PC-9 (cell line): ENCODE measurements at regions of chr5 and their contacts with region 1.

Region 1: DNA sequence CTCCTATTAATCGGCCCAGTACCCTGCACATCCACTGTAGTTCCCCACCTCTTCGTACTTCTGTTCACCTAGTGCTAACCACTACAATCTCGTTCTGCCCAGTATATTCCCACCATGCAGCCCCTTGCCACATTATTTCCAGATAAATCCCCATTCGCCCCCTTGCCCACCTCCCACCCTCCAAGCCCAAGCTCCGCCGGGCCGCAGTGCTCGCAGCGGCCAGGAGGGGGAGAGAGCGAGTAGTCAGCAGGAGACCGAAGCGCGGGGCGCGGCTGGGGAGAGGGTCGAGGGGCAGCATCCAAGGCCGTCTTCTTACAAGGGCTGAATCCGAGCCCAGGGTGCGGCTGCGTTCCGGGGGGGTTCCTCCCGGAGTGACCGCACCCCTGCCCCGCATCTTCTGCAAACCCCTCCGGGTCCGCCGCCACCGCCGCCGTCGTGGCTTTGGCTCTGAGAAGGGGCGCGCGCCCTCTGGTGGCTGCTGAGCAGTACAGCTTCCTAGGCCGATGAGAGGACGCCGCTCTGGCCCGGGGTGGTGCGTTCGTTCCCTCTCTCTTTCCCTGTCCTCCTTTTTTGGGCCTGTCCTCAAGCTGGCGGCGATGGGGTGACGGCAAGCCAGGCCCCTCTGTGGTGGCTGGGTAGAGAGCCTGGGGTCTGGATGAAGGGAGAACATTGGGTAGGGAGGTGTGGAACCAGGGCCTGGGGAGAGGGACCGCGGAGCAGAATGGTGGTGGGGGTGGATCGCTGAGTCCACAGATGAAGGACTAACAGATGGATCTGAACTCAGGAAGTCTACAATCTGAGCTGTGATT is 30.0 kb upstream of the PSD2 start:
- DNase-seq: peak in 1 of 2 experiments; percentile 80
- H3K4me3 ChIP-seq: peak overlapping the region; percentile 73
- H3K27ac ChIP-seq: no peak overlapping the region
- H3K4me1 ChIP-seq: peaks cover 18% of the 10 kb centered on the region
- H3K27me3 ChIP-seq: no peaks in the 10 kb centered on the region
- CTCF ChIP-seq: peak; percentile 99

Region 2: GRCh38 chr5:139167952-139168730 is 597.5 kb before region 1 on chr5:
- CTCF ChIA-PET with region 1: no interaction called
- POLR2A ChIA-PET with region 1: no interaction called
- intact Hi-C with region 1: no loop called
- DNase-seq: no peak
- H3K4me3 ChIP-seq: no peak overlapping the region
- H3K27ac ChIP-seq: no peak overlapping the region
- H3K4me1 ChIP-seq: no peaks in the 10 kb centered on the region
- H3K27me3 ChIP-seq: no peaks in the 10 kb centered on the region
- CTCF ChIP-seq: no peak

Region 3: GRCh38 chr5:139611703-139612584 is 153.7 kb before region 1 on chr5:
- CTCF ChIA-PET with region 1: no interaction called
- POLR2A ChIA-PET with region 1: no interaction called
- intact Hi-C with region 1: no loop called
- DNase-seq: no peak
- H3K4me3 ChIP-seq: no peak overlapping the region
- H3K27ac ChIP-seq: no peak overlapping the region
- H3K4me1 ChIP-seq: no peaks in the 10 kb centered on the region
- H3K27me3 ChIP-seq: no peaks in the 10 kb centered on the region
- CTCF ChIP-seq: no peak

Region 4: GRCh38 chr5:139690064-139690802 is 75.4 kb before region 1 on chr5:
- CTCF ChIA-PET with region 1: interaction called, 3 read pairs
- POLR2A ChIA-PET with region 1: no interaction called
- intact Hi-C with region 1: loop called (anchors 1 kb)
- DNase-seq: peak in 1 of 2 experiments; percentile 57
- H3K4me3 ChIP-seq: no peak overlapping the region
- H3K27ac ChIP-seq: no peak overlapping the region
- H3K4me1 ChIP-seq: no peaks in the 10 kb centered on the region
- H3K27me3 ChIP-seq: no peaks in the 10 kb centered on the region
- CTCF ChIP-seq: peak; percentile 74

Region 5: GRCh38 chr5:139696894-139697658 is 68.5 kb before region 1 on chr5:
- CTCF ChIA-PET with region 1: interaction called, 3 read pairs
- POLR2A ChIA-PET with region 1: no interaction called
- intact Hi-C with region 1: loop called (anchors 2 kb)
- DNase-seq: peak in 1 of 2 experiments; percentile 75
- H3K4me3 ChIP-seq: peak overlapping the region; percentile 45; the same call in 1 of the 2 replicates
- H3K27ac ChIP-seq: no peak overlapping the region
- H3K4me1 ChIP-seq: peaks cover 4% of the 10 kb centered on the region; the same call in 1 of the 2 replicates
- H3K27me3 ChIP-seq: peaks cover 15% of the 10 kb centered on the region; the same call in 1 of the 2 replicates
- CTCF ChIP-seq: no peak

Region 6: DNA sequence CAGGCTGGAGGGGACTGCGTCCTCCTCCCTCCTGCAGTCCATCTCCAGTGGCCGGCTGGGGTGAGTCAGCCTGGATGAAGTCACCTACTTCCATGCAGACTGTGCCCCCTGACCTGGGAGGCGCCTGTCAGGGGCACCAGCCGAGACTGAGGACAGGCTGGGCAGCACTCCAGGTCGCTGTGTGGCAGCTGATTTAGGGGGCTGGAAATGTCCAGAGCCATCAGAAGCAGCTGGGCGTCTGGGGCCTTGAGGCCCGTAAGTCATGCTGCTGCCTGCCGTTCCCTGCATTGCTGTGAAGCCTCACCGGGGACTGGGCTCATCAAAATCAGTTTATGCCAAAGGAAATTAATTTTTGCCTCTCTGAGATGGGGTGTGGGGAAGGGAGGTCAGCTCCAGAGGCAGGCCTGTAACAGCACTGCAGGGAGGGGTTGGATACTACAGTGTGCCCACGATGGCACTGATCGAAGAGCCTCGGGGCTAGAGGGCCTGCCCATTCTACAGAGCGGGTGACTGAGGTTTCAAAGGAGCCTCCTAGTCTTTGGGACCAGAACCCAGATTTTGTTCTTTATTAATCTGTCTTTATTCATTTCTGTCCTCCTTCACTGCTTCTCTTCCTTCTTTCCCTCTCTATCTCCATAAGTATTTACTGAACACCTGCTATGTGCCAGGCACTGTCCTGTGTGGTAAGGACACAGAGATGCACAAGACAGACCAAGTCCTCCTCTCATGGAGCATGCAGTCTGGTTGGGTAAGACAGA is 40.4 kb before region 1 on chr5:
- CTCF ChIA-PET with region 1: no interaction called
- POLR2A ChIA-PET with region 1: no interaction called
- intact Hi-C with region 1: loop called (anchors 1 kb)
- DNase-seq: peak; percentile 57 to 67
- H3K4me3 ChIP-seq: no peak overlapping the region
- H3K27ac ChIP-seq: no peak overlapping the region
- H3K4me1 ChIP-seq: peaks cover 9% of the 10 kb centered on the region
- H3K27me3 ChIP-seq: no peaks in the 10 kb centered on the region
- CTCF ChIP-seq: no peak

Region 7: GRCh38 chr5:140189977-140190871 is 424.6 kb after region 1 on chr5:
- CTCF ChIA-PET with region 1: no interaction called
- POLR2A ChIA-PET with region 1: interaction called, 13 read pairs
- intact Hi-C with region 1: no loop called
- DNase-seq: no peak
- H3K4me3 ChIP-seq: no peak overlapping the region
- H3K27ac ChIP-seq: peak overlapping the region; percentile 27; the same call in 1 of the 2 replicates
- H3K4me1 ChIP-seq: 0 out of 2 replicates have a peak, but pooled peaks cover 5% of the 10 kb centered on the region
- H3K27me3 ChIP-seq: no peaks in the 10 kb centered on the region
- CTCF ChIP-seq: no peak